Activated T-helper 1 cell treated with anti-CD3 and anti-CD28 coated beads, Interleukin-12 subunit alpha, Interleukin-12 subunit beta, Interleukin-2, Interleukin-4 antibody, amounts not matched to agents 30 ng/mL and 10 ng/mL and 1 ng/mL, durations not matched to agents 14 hours and 24 hours and 36 hours (primary cell): ENCODE measurements at regions of chr15 and their contacts with region 1.

Region 1: GRCh38 chr15:90931737-90932659 is at the start of gene HDDC3:
- DNase-seq: peak; percentile 87
- H3K4me3 Mint-ChIP-seq: peak within 1 kb of the TSS; percentile 99
- H3K27ac Mint-ChIP-seq: peak within 1 kb of the TSS; percentile 99
- H3K4me1 Mint-ChIP-seq: peaks cover 69% of the 10 kb centered on the region
- H3K27me3 Mint-ChIP-seq: no peaks in the 10 kb centered on the region
- total RNA-seq, gene HDDC3: 38.8 and 39.0 TPM in 2 replicates

Region 2: GRCh38 chr15:90101969-90102890 is 829.8 kb before region 1 on chr15 and contains the start of gene IDH2:
- intact Hi-C with region 1: loop called (anchors 5 kb)
- DNase-seq: peak; percentile 72
- H3K4me3 Mint-ChIP-seq: peak within 1 kb of the TSS; percentile 89
- H3K27ac Mint-ChIP-seq: peak within 1 kb of the TSS; percentile 94
- H3K4me1 Mint-ChIP-seq: peaks cover 52% of the 10 kb centered on the region
- H3K27me3 Mint-ChIP-seq: peaks cover 12% of the 10 kb centered on the region
- total RNA-seq, gene IDH2: 94.1 and 96.3 TPM in 2 replicates

Region 3: DNA sequence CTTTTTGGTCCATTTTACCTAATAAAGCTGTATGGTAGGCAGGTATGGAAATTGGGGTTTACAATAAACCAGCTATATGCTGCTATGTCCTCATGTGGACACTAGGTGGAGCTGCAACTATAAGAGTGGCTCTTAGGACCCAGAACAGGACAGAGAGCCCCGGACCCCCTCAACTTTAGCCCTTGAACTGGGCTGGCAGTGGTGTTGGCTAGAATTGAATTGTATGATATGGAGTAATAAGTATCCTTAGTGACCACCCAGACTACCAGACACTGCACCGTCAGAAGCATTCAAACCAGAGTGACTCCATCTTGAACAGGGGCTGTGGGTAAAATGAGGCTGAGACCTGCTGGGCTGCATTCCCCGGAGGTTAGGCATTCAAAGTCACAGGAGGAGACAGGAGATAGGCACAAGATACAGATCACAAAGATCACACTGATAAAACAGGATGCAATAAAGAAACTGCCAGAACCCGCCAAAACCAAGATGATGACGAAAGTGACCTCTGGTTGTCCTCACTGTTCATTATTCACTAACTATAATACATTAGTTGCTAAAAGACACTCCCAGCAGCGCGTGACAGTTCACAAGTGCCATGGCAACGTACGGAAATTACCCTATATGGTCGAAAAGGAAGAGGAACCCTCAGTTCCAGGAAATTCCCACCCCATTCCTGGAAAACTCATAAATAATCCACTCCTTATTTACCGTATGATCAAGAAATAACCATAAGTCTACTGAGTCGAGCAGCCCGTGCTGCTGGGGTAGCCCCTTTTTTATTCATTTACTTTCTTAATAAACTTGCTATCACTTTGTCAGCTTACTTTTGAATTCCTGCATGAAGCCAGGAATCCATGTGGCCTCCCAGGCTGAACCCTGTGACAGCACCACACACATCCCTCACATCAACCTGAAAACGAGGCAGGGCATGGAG is 283.6 kb before region 1 on chr15:
- intact Hi-C with region 1: loop called (anchors 1 kb)
- DNase-seq: peak; percentile 75
- H3K4me3 Mint-ChIP-seq: peak overlapping the region; percentile 35
- H3K27ac Mint-ChIP-seq: peak overlapping the region; percentile 97
- H3K4me1 Mint-ChIP-seq: peaks cover 49% of the 10 kb centered on the region
- H3K27me3 Mint-ChIP-seq: no peaks in the 10 kb centered on the region

Region 4: GRCh38 chr15:90839187-90840071 is 92.6 kb before region 1 on chr15:
- intact Hi-C with region 1: loop called (anchors 5 kb)
- DNase-seq: no peak
- H3K4me3 Mint-ChIP-seq: peak overlapping the region; percentile 79
- H3K27ac Mint-ChIP-seq: peak overlapping the region; percentile 99
- H3K4me1 Mint-ChIP-seq: peaks cover 84% of the 10 kb centered on the region
- H3K27me3 Mint-ChIP-seq: no peaks in the 10 kb centered on the region

Region 5: GRCh38 chr15:90954712-90955671 is 23.0 kb after region 1 on chr15 and contains the start of gene RCCD1:
- intact Hi-C with region 1: loop called (anchors 1 kb)
- DNase-seq: peak; percentile 90
- H3K4me3 Mint-ChIP-seq: peak within 1 kb of the TSS; percentile 90
- H3K27ac Mint-ChIP-seq: peak within 1 kb of the TSS; percentile 90
- H3K4me1 Mint-ChIP-seq: peaks cover 24% of the 10 kb centered on the region
- H3K27me3 Mint-ChIP-seq: no peaks in the 10 kb centered on the region
- total RNA-seq, gene RCCD1: 26.4 and 27.2 TPM in 2 replicates

Region 6: DNA sequence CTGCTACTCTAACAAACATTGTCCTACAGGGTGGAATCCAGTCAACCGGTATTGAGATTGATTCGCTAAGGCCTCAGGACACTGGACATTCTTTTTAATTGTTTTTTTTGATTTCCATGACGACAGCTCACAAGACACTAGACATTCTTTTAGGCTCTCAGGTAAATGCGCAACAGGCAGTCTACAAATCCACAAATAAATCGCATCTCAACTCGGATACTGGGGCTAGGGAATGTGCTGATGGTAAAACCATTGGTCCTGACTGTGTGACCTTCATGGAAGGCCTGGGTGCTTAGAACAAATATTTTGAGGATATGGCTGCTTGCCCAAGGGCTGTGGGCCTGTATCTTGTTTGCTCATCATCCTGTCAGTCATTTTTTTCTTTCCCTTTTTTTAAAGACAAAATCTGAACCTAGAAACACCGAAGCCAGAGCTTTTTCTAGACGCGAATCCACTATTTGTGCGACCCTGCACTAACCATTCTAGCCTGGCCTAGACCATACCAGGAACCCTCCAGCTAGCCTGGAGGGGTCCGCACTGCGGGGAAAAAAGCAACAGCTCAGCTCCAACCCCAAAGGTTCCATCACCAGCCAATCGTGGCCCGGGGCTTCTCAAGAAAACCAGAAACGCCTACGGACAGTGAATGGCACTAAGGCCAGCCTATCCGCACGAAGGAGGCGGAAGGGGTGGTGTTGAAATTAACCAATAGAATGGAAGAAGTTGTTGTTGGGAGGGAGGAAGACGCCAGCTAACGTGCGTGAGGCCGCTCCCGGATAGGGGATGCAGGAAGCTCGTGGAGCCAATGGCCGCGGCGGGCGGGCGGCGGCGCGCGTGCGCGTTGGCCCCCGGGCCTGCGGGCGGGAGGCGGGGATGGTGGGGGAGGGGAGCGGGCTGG is 1950.1 kb after region 1 on chr15:
- intact Hi-C with region 1: loop called (anchors 10 kb)
- DNase-seq: peak; percentile 97
- H3K4me3 Mint-ChIP-seq: peak overlapping the region; percentile 87
- H3K27ac Mint-ChIP-seq: peak overlapping the region; percentile 97
- H3K4me1 Mint-ChIP-seq: peaks cover 60% of the 10 kb centered on the region
- H3K27me3 Mint-ChIP-seq: no peaks in the 10 kb centered on the region